ENCODE measurements at regions of chr7 and their contacts with region 1.

Region 1: DNA sequence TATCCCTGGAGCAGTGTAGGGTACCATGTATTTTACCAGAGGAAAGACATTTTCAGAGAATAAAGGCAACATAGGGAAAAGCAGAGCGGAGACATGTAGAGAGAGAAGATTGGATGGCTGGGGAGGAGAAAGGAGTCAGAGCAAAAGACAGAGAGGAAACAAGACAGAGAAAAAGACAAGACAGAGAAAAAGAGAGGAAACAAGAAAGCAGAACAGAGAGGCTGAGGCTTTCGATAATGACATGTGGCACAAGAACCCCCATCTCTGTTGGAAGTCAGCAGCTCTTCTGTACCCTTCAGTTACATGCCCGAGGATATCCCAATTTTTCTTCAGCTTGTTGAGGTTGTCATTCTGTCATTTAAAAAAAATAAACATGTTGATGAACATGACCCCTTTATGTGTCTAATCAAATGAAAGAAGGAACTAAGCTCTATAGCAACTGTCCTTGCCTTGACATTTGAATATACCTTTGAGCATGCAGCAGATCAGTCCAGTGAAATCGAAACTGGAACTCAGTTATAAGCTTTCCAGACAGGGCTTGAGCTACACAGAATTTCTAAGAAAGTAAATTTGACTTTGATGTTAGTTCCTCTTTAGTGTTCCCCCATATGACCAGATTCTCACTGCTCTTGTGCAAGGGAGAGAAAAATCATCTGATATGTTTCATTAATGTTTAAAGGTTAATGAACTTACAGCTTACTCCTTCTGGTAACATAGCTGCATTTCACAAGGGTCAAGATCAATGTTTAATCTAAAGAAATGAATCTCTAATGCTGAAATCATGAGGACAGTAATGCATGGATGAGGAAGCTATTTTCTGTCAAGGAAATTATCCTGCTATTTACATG is 75.1 kb upstream of the SP4 start:
- DNase-seq: peak in 3 of 35 experiments; percentile 4 to 63 (median 13)
- ATAC-seq: peak; percentile 71 to 83 (median 76)
- H3K4me3 ChIP-seq: peak overlapping the region in 1 of 2 donors; percentile 7
- H3K4me3 Mint-ChIP-seq: peak overlapping the region; percentile 46 to 70 (median 53)
- H3K27ac ChIP-seq: peak overlapping the region; percentile 75
- H3K27ac Mint-ChIP-seq: peak overlapping the region; percentile 89 to 95
- H3K4me1 ChIP-seq: peaks cover 35 to 38% of the 10 kb centered on the region in 2 experiments
- H3K4me1 Mint-ChIP-seq: peaks cover 55 to 58% (median 56%) of the 10 kb centered on the region in 3 donors
- H3K27me3 ChIP-seq: no peaks in the 10 kb centered on the region
- H3K27me3 Mint-ChIP-seq: no peaks in the 10 kb centered on the region

Region 2: DNA sequence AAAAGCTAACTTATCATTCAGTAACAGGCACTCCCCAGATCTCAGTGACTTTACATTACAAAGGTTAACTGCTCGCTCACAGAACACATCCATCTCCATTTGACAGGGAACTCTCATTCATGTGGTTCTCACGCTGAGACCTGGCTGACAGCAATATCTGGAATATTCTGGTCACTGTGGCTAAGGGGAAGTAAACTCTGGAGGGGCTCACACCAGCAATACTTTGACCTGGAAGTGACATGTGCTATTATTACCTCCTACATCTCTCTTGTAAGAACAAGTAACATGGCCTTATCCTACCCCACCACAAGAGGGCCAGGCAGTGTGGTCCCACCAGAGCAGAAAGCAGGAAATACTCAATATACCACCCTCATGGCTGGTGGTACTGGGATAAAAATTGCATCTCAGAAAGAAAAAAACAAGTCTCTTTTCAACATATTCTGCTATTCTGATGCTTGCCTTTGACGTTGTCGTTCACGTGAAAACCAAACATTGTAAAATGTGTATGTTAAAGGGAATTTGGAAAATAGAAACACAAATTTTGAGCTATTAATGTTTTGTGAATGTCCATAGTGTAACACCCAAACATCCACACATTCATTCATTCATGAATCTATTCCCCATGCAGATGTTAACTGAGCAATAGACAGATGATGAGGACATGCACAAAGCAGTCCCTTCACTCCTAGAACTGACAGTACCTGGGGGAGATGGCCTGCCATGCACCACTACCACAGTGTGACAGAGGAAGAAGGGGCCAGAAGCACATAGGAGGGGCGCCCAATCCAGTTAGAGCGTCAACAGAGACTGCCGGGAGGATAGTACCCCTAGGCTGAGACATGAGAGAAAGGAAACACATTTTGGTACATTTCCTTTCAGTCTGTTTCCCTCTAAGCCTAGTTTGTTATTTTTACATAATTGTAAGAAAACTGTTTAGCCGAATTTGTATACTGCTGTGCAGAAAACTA is 90.9 kb before region 1 on chr7:
- CTCF ChIA-PET with region 1: interaction called, 3 to 5 read pairs
- POLR2A ChIA-PET with region 1: interaction called in 1 of 2 experiments, 11 read pairs
- DNase-seq: peak; percentile 3 to 65 (median 42)
- ATAC-seq: peak; percentile 67 to 81 (median 72)
- H3K4me3 ChIP-seq: no peak overlapping the region
- H3K4me3 Mint-ChIP-seq: no peak overlapping the region
- H3K27ac ChIP-seq: no peak overlapping the region
- H3K27ac Mint-ChIP-seq: peak overlapping the region in 1 of 2 donors; percentile 19
- H3K4me1 ChIP-seq: peaks cover 0 to 3% of the 10 kb centered on the region in 2 experiments
- H3K4me1 Mint-ChIP-seq: peaks cover 8 to 12% (median 11%) of the 10 kb centered on the region in 3 donors
- H3K27me3 ChIP-seq: peaks cover 0 to 3% of the 10 kb centered on the region in 2 experiments
- H3K27me3 Mint-ChIP-seq: peaks cover 6 to 7% of the 10 kb centered on the region in 2 donors

Region 3: DNA sequence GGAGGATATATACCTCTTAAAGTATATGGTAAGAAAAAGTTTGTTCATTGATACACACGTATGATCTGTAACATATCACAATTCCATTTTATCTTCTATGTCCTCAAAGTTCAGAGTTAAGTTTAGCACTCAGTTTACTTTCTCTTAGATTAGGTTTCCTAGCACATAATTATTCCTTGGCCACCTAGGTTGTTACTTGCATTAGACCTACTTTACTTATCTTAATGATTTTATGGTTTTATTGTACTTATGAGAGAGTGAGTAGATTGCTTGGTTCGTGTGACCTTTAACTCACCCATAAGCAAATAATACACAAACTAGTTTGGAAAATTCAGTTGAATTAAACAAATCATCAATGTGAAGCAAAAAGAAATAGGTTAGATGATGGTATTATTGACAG is 41.2 kb after region 1 on chr7:
- CTCF ChIA-PET with region 1: no interaction called
- POLR2A ChIA-PET with region 1: no interaction called
- DNase-seq: no peak
- ATAC-seq: no peak
- H3K4me3 ChIP-seq: no peak overlapping the region
- H3K4me3 Mint-ChIP-seq: no peak overlapping the region
- H3K27ac ChIP-seq: no peak overlapping the region
- H3K27ac Mint-ChIP-seq: no peak overlapping the region
- H3K4me1 ChIP-seq: no peaks in the 10 kb centered on the region
- H3K4me1 Mint-ChIP-seq: no peaks in the 10 kb centered on the region
- H3K27me3 ChIP-seq: no peaks in the 10 kb centered on the region
- H3K27me3 Mint-ChIP-seq: no peaks in the 10 kb centered on the region

Measured in T-cell (primary cell).